ENCODE measurements at regions of chr2 and their contacts with region 1.

Region 1: DNA sequence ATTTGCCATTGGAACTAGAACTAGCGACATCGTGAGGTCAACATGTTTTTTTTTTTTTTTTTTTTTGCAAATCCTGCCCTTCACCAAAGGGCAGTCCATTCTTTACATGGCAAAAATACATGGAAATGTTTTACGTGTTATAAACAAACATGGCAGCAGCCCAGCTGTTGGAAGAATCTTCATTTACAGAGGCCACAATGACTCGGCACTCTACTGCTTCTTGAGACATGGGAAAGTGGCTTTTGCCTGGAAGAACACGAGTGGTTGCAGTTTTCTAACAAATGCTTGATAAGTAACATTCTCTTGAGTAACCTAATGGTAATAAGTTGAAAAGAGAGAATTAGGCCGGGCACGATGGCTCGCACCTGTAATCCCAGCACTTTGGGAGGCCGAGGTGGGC is 22.8 kb upstream of the POLR1B start:
- DNase-seq: no peak
- H3K4me3 ChIP-seq: no peak overlapping the region
- CTCF ChIP-seq: no peak
- POLR2A ChIP-seq: no peak

Region 2: GRCh38 chr2:112465382-112465781 is 54.1 kb before region 1 on chr2:
- intact Hi-C with region 1: loop called (anchors 10 kb)
- DNase-seq: no peak
- H3K4me3 ChIP-seq: no peak overlapping the region
- CTCF ChIP-seq: no peak
- POLR2A ChIP-seq: no peak

Region 3: DNA sequence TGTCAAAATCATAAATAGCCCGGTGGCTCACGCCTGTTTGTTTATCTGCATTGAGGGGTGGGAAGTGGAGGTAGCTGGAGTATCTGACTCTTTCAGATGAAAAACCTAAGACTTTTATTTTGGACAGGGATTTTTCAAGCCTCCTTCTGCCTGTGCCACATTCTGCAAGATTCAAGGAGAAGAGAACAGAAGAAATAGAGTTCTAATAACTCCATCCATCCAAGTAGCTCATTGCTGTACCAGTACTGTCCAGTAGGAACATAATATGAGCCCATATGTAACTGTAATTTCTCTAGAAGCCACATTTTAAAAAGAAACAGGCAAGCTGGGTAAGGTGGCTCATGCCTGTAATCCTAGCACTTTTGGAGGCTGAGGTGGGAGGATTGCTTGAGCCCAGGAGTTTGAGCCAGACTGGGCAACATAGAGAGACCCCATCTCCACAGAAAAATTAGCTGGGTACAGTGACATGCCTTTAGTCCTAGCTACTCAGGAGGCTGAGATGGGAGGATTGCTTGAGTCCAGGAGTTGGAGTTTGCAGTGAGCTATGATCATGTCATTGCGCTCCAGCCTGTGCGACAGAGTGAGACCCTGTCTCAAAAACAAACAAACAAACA is 165.9 kb after region 1 on chr2:
- intact Hi-C with region 1: no loop called
- DNase-seq: no peak
- H3K4me3 ChIP-seq: no peak overlapping the region
- CTCF ChIP-seq: no peak
- POLR2A ChIP-seq: no peak

Region 4: DNA sequence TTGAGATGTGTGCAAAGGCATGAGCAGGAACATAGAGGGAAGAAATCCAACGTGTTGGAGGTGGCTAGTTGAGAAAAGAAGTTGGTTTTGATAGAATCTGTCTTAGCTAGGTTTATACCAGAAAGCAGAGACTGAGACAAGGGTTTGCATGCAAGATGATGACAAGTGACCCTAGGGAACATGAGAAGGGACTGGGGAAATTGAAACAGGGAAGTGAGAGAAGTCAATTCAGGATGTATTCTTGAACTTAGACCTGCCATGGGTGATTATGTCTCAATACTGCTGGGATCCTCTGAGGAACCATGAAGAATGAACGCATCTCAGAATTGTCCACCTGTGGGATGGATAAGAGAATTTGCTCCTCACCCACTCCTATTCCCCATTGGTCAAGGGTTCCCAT is 506.2 kb after region 1 on chr2:
- intact Hi-C with region 1: no loop called
- DNase-seq: no peak
- H3K4me3 ChIP-seq: no peak overlapping the region
- CTCF ChIP-seq: no peak
- POLR2A ChIP-seq: no peak

Measured in lower leg skin (tissue), 4 donors.